ENCODE measurements at regions of chr9 and their contacts with region 1.

Region 1: GRCh38 chr9:129166623-129167557 is 11.2 kb downstream of the IER5L start:
- DNase-seq: peak; percentile 81

Region 2: DNA sequence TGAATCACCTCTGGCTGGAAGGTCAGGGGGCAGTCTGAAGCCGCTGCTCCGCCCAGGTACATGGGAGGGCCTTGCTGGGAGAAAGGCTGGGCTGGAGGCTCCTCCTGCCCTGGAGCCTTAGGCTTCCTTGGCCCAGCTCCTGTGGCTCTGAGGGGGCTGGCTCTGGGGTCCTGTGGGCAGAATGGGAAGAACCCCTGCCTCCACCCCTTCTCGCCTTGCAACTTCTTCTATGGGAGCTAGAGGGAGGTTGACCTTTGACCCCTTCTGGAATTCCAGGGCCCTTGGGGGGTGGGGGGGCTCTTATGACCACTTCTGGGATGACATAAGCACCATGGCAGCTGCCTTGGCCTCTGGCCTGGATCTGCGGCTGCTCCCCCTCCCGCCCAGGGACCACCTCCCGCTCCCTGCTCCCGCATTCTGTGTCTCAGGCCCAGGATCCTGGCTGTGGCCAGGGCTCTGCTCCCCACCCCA is 21.0 kb before region 1 on chr9:
- intact Hi-C with region 1: loop called (anchors 2 kb)
- DNase-seq: peak; percentile 81

Region 3: GRCh38 chr9:129437626-129438323 is 270.9 kb after region 1 on chr9:
- intact Hi-C with region 1: no loop called
- DNase-seq: no peak

Region 4: DNA sequence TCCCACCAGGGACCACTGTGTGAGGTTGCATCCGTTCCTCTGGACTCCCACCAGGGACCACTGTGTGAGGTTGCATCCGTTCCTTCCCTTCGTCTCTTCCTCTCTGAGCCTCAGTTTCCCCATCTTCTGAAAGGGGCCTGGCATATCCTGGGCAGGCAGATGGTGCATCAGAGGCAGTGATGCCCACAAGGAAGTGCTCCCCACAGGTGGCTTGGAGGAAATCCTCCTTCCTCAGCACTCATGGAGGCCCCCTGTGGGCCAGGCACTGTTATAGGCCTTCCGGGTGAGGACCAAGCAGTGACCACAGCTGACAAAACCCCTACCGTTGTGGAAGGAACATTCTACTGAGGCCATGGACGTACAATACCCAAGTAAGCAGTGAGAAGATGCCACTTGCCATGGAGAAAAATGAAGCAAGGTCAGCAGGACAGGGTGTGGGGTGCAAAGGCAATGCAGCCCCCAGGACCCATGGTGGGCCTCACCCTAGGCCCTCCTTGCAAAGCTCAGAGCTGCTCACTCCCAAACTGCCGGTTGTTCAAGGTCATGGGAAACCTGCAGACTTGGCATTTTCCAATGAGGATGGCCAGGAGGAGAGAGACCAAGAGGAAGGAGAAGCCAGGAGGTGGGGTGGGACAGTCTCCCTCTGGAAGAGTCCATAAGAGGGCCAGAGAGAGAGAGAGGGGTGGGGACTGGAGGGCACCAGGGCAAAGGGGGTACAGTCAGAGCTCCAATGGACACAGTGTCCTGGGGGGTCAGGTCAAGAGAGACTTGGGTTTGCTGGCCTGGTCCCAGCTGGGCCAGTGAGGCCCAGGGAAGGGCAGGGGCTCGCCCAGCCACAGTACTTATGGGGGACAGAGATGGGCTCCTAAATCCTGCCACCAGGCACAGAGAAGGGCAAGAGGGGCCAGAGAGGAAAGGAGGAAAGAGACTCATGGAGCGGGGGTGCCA is 402.9 kb after region 1 on chr9:
- intact Hi-C with region 1: loop called (anchors 5 kb)
- DNase-seq: no peak

Measured in cardiac septum (tissue), 1 donor.